ENCODE measurements at regions of chr2 and their contacts with region 1.

Region 1: DNA sequence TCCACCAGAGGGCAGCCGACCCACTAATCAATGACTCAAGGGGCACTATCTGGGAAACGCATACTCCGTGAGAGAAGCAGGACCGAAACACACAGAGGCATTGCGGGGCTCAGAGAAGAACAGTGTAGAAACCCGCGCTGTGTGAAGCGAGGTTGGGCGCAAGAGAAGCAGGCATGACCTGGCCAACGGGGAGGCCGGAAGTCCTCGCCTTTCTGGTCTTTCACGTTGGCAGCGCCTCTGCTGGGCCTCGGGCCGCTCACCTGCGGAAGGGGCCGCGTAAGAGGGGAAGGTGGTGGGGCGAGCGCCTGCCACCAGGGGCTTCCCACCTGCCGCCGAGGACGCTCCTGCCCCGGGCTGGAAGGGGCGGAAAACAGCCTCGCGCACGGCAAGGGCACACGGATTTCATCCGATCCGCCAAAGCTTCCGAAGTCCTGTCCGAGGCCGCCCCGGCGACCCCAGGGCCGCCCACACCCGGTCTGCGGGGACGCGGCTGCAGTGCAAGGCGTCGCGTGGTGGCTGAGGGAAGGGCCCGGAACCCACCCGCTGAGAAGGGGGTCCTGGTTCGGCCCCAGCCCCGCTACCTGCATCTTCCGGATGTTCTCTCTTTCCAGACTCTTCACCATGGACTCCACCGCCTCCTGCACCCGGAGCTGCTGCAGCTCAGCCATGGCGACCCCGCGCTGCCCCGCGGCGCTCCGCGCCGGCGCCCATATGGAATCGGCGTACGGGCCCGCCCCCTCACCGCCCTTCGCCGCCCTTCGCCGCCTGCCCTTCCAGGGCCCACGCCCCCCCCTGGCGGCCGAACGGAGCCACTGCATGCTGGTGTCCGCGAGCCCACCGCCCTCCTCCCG is at the start of gene FAM136A:
- DNase-seq: peak; percentile 59
- ATAC-seq: peak; percentile 82
- H3K4me3 ChIP-seq: peak within 1 kb of the TSS; percentile 72 to 79
- H3K27ac ChIP-seq: peak within 1 kb of the TSS; percentile 91
- H3K4me1 ChIP-seq: peaks cover 8 to 25% of the 10 kb centered on the region in 2 experiments
- H3K27me3 ChIP-seq: no peaks in the 10 kb centered on the region
- CTCF ChIP-seq: peak; percentile 72 to 91 (median 72)
- POLR2A ChIP-seq: peak; percentile 91
- RAD21 ChIP-seq: peak; percentile 83
- total RNA-seq, gene FAM136A: 83.0 TPM

Region 2: DNA sequence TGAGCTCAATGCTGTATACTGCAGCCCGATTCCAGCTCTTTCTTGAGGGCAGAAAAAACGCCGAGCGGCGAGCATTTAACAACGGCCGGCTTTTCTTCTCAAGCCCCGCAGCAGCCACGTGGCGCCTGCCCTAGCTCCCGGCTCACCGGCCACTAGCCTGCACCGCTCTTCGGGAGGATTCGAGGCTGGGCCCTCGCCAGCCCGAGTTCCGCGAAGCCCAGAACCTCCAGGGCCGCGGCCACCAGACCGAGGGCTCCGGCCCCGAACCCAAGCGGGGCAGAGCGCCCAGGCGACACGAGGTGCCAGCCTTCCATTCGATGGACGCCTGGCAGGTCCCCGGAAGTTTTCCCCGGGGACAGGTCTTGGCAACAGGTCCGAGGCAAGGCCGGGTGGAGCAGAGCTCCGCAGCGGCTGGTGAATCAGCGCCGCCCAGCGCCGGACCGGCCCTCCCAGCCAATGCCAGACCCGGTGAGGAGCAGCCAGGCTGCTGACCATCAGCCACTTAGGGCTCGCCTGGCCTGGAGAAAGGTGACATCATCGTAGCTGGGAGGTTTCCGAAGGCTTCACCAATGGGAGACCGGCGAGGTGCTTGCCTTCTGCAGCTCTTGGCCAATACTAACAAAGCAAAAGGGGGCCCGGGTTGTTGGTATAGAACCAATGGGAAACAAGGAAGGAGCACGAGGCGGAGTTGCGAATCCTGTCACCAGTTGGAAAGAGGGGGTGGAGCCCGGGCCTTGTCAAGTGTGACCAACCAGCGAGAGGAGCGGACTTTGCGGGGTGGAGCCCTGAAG is 387.2 kb before region 1 on chr2:
- CTCF ChIA-PET with region 1: interaction called, 15 read pairs
- POLR2A ChIA-PET with region 1: interaction called, 4 read pairs
- RAD21 ChIA-PET with region 1: no interaction called
- intact Hi-C with region 1: loop called (anchors 2 kb)
- DNase-seq: peak; percentile 100
- ATAC-seq: peak; percentile 91
- H3K4me3 ChIP-seq: peak overlapping the region; percentile 55 to 79
- H3K27ac ChIP-seq: peak overlapping the region; percentile 81
- H3K4me1 ChIP-seq: peaks cover 0 to 18% of the 10 kb centered on the region in 2 experiments; a peak in 3 of 4 replicates
- H3K27me3 ChIP-seq: no peaks in the 10 kb centered on the region
- CTCF ChIP-seq: peak in 1 of 3 experiments; percentile 22; a peak in 1 of 6 replicates
- POLR2A ChIP-seq: no peak
- RAD21 ChIP-seq: peak; percentile 64

Region 3: DNA sequence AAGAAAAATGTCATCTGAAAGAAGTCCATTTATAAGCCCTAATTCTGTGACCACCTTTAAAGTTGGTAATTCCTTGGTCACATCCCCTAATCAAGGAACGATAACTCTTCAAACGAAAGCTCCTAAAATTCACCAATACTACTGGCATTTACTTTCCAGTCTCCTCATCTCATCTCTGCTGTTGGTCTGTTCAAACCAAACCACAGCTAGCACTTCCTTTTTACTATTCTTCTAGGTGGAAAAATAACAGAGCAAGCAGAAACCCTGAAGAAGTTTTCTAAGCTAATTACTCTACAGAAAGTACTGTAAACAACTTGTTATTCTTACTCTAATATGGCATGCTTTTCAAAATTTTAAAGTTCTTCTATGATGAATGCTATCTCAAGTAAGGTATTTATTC is 74.8 kb before region 1 on chr2:
- CTCF ChIA-PET with region 1: no interaction called
- POLR2A ChIA-PET with region 1: no interaction called
- RAD21 ChIA-PET with region 1: no interaction called
- intact Hi-C with region 1: no loop called
- DNase-seq: no peak
- ATAC-seq: no peak
- H3K4me3 ChIP-seq: no peak overlapping the region
- H3K27ac ChIP-seq: no peak overlapping the region
- H3K4me1 ChIP-seq: no peaks in the 10 kb centered on the region
- H3K27me3 ChIP-seq: no peaks in the 10 kb centered on the region
- CTCF ChIP-seq: no peak
- POLR2A ChIP-seq: no peak
- RAD21 ChIP-seq: no peak

Region 4: DNA sequence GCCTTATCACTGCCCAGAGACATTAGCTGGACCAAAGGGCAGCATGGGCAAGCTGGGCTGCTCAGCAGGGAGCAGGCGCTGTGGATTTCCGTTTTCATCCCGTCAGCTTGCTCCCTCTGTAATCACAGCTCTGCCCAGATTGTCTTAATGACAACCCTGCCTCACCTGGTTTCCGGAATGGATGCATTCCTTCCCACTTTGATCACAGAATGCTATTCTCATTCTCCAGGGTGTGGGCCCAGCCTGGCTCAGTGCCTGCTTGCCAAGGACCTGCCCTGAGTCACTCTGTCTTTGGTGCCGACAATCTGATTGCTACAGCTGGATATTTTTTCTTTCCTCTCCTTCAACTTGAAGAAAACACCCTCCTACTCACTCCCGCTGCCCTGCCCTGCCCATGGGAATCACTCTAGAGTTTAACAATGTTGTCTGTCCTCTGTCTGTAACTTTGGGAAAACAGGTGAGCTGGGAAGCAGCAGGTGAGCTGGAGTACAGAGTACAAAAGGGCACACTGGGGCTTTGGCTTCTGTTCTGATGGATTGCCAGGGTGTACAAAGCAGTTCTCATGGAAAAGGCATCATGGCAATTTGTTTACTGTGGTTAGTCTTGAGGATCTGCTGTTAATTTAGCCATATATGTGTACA is 27.5 kb after region 1 on chr2:
- CTCF ChIA-PET with region 1: interaction called, 49 read pairs
- POLR2A ChIA-PET with region 1: interaction called, 8 read pairs
- RAD21 ChIA-PET with region 1: interaction called, 6 to 7 read pairs
- intact Hi-C with region 1: no loop called
- DNase-seq: peak; percentile 96
- ATAC-seq: peak; percentile 86
- H3K4me3 ChIP-seq: peak overlapping the region in 1 of 2 experiments; percentile 46; a peak in 2 of 4 replicates
- H3K27ac ChIP-seq: peak overlapping the region; percentile 74
- H3K4me1 ChIP-seq: peaks cover 29 to 38% of the 10 kb centered on the region in 2 experiments
- H3K27me3 ChIP-seq: no peaks in the 10 kb centered on the region
- CTCF ChIP-seq: no peak
- POLR2A ChIP-seq: no peak
- RAD21 ChIP-seq: peak; percentile 25

Region 5: DNA sequence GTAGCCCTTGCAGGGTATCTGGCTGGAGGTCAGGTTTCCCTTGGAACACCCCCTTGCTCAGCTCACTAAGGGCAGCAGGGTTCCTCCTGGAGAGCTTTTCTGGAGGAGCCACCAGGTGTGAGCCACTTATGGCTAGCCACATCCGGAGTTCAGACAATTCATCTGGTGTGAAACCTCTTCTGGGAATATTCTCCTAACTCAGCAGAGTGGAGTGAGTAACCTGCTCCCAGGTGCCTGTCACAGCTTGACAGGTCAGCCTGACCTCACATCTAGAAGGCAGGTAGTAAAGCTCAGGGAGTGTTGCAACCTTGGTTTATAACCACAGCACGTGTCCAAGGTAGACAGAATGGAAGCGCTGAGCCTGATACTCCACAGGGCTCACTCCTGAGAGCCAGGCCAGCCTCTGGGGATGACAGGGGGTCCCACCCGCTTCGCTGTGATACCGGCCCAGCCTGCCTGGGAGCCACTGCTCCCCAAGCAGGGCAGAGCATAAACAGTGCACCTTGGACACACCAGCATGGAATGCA is 314.7 kb after region 1 on chr2:
- CTCF ChIA-PET with region 1: interaction called, 49 read pairs
- POLR2A ChIA-PET with region 1: no interaction called
- RAD21 ChIA-PET with region 1: interaction called, 6 to 9 read pairs
- intact Hi-C with region 1: loop called (anchors 1 kb)
- DNase-seq: no peak
- ATAC-seq: no peak
- H3K4me3 ChIP-seq: no peak overlapping the region
- H3K27ac ChIP-seq: no peak overlapping the region
- H3K4me1 ChIP-seq: peaks cover 0 to 2% of the 10 kb centered on the region in 2 experiments; a peak in 1 of 4 replicates
- H3K27me3 ChIP-seq: no peaks in the 10 kb centered on the region
- CTCF ChIP-seq: no peak
- POLR2A ChIP-seq: no peak
- RAD21 ChIP-seq: no peak

Region 6: DNA sequence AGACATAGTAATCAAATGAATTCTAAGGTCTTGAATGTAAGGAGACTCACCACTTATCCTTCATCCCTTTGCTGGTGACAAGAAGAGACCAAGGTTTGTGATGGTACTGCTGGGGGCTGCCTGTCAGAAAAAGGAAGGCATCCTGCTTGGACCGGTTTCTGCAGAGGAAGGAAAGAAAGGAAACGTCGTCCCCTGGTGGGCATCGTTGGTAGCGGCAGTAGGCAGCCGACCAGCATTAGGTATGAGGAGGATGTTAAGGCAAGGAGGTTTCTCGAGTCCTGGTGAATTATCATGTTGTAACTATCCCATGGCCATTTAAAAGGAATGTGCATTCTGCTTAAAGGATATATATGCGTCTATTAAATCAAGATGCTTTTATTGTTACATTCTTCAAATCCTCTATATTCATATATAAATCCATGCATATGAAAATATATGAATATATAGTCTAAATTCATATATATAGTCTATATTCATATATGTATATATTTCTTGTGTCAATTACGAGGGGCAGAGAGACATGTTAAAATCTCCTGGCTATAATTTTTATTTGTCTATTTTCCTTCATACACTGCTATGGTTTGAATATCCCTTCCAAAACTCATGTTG is 346.4 kb after region 1 on chr2:
- CTCF ChIA-PET with region 1: interaction called, 167 read pairs
- POLR2A ChIA-PET with region 1: interaction called, 12 read pairs
- RAD21 ChIA-PET with region 1: interaction called, 9 to 21 read pairs
- intact Hi-C with region 1: loop called (anchors 1 kb)
- DNase-seq: peak; percentile 55
- ATAC-seq: peak; percentile 87
- H3K4me3 ChIP-seq: no peak overlapping the region
- H3K27ac ChIP-seq: no peak overlapping the region
- H3K4me1 ChIP-seq: peaks cover 0 to 3% of the 10 kb centered on the region in 2 experiments; a peak in 1 of 4 replicates
- H3K27me3 ChIP-seq: no peaks in the 10 kb centered on the region
- CTCF ChIP-seq: peak; percentile 95 to 99 (median 99)
- POLR2A ChIP-seq: no peak
- RAD21 ChIP-seq: peak; percentile 99

Region 7: GRCh38 chr2:70789304-70790135 is 488.0 kb after region 1 on chr2:
- CTCF ChIA-PET with region 1: interaction called, 6 read pairs
- POLR2A ChIA-PET with region 1: no interaction called
- RAD21 ChIA-PET with region 1: no interaction called
- intact Hi-C with region 1: loop called (anchors 2 kb)
- DNase-seq: peak; percentile 46
- ATAC-seq: peak; percentile 90
- H3K4me3 ChIP-seq: peak overlapping the region; percentile 3 to 42; a peak in 3 of 4 replicates
- H3K27ac ChIP-seq: no peak overlapping the region
- H3K4me1 ChIP-seq: peaks cover 0 to 8% of the 10 kb centered on the region in 2 experiments; a peak in 2 of 4 replicates
- H3K27me3 ChIP-seq: no peaks in the 10 kb centered on the region
- CTCF ChIP-seq: peak; percentile 77 to 84 (median 77)
- POLR2A ChIP-seq: no peak
- RAD21 ChIP-seq: peak; percentile 89

Region 8: DNA sequence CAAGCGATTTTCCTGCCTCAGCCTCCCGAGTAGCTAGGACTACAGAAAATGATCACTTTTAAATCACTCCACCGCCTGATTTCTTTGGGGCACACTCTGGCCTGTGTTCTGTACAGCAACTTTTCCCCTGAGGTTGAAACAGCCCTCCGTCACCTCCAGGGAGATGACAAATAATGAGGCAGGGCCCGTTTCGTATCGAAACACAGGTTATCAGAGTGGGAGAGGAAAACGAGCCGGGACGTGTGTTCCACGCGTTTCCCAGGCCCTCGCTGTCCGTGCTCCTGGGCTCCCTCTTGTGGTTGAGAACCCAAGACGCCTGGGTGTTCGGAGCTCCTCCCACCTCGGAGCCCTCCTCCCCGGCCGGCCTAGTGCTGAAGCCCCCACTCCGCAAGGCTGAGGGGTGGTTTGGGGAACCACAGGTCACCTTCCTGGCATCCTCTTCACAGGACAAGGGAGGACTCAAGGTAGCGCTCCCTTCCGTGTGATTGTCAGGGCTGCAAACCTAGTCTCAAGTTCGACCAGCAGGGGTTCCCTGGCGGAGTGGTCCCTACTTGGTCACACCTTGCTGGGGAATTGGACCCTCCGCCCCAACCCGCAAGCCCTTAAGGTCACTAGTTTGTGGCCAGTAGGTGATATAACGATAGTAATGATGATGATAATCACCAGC is 646.9 kb after region 1 on chr2:
- CTCF ChIA-PET with region 1: interaction called, 12 read pairs
- POLR2A ChIA-PET with region 1: no interaction called
- RAD21 ChIA-PET with region 1: interaction called in 1 of 2 experiments, 4 read pairs
- intact Hi-C with region 1: loop called (anchors 10 kb)
- DNase-seq: peak; percentile 71
- ATAC-seq: peak; percentile 89
- H3K4me3 ChIP-seq: peak overlapping the region; percentile 58 to 59
- H3K27ac ChIP-seq: peak overlapping the region; percentile 7; the same call in 1 of the 2 replicates
- H3K4me1 ChIP-seq: peaks cover 16 to 34% of the 10 kb centered on the region in 2 experiments
- H3K27me3 ChIP-seq: no peaks in the 10 kb centered on the region
- CTCF ChIP-seq: peak; percentile 84 to 90 (median 88)
- POLR2A ChIP-seq: no peak
- RAD21 ChIP-seq: peak; percentile 41; the same call in 1 of the 2 replicates